HEK293 (cell line): ENCODE measurements at regions of chr18 and their contacts with region 1.

Region 1: DNA sequence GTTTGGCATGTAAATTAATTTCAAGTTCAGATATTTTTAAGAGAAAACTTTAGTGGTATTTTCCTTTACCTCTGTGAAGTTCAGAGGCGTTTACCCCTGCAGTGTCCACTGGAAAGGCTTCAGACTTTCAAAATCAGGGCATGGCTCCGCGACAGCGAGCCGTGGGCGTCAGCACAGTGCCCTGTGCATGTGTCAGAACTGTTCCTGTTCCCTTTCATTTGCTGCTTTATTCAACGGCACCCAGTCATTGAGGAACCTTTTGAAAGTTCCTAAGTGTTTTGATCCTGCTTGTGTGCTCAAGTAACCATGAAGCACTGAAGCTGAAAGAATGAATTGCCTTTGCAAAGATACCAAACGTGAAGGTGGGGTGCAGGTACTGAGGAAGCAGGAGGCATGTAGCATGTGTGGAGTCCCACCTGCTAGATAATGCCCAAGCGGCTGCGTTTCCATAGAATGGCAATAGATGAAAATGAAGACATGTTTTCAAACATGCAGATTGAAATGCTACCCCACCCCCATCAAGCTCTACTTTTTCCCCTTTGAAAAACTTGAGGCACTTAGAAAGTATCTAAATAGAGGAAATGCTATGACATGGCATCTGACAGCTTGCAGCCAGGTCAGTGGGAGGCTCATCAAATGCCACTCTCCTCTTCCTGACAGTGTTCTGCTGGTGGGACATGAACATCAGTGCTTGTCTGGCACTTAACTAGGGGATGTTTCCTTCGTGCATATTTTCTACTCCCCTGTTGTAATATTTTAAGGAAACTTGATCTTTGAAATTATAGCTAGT is 148.6 kb downstream of the ZNF236 start:
- H3K4me3 ChIP-seq: no peak overlapping the region
- H3K27ac ChIP-seq: no peak overlapping the region
- H3K4me1 ChIP-seq: no peaks in the 10 kb centered on the region
- CTCF ChIP-seq: no peak

Region 2: DNA sequence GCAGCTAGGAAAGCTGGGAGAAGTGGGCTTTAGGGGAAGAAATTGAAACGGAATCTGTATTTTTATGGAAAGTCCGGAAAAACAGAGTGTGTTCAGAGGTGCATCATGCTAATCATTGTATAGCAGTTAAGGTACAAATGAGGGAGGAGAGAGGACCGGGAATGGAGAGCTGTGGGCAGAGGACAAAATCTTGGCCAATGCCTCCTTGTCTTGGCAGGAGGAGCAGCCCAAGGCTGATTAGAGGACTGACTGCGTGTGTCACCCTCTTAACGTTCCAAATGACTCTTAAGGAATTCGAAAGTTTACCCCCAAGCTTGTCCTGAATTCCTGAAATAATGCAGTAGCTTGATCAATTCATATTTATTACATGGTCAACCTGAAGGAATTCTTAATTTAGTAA is 67.6 kb before region 1 on chr18:
- CTCF ChIA-PET with region 1: no interaction called
- POLR2A ChIA-PET with region 1: no interaction called
- H3K4me3 ChIP-seq: no peak overlapping the region
- H3K27ac ChIP-seq: no peak overlapping the region
- H3K4me1 ChIP-seq: no peaks in the 10 kb centered on the region
- CTCF ChIP-seq: no peak

Region 3: GRCh38 chr18:76982841-76983587 is 12.0 kb after region 1 on chr18:
- CTCF ChIA-PET with region 1: interaction called, 21 read pairs
- POLR2A ChIA-PET with region 1: no interaction called
- H3K4me3 ChIP-seq: no peak overlapping the region
- H3K27ac ChIP-seq: no peak overlapping the region
- H3K4me1 ChIP-seq: no peaks in the 10 kb centered on the region
- CTCF ChIP-seq: peak; percentile 88